Kidney (tissue), 22 donors: ENCODE measurements at regions of chr9 and their contacts with region 1.

Region 1: GRCh38 chr9:112939418-112939817 is 48.7 kb upstream of the SLC46A2 start:
- DNase-seq: no peak
- H3K4me3 ChIP-seq: no peak overlapping the region
- H3K27ac ChIP-seq: no peak overlapping the region
- H3K4me1 ChIP-seq: no peaks in the 10 kb centered on the region
- H3K27me3 ChIP-seq: no peaks in the 10 kb centered on the region
- CTCF ChIP-seq: no peak

Region 2: DNA sequence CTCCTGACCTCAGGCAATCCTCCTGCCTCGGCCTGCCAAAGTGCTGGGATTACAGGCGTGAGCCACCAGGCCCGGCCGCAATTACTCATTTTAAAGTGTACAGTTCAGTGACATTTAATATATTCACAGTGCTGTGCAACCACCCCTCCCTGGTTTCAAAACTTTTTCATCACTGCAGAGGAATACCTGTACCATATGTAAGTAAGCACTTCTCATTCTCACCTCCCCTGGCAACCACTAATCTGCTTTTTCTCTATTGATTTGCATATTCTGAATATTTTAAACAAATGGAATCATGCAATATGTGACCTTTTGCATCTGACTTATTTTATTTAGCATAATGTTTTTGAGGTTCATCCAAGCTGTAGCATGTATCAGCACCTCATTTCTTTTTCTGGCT is 474.1 kb before region 1 on chr9:
- intact Hi-C with region 1: no loop called
- DNase-seq: no peak
- H3K4me3 ChIP-seq: no peak overlapping the region
- H3K27ac ChIP-seq: no peak overlapping the region
- H3K4me1 ChIP-seq: no peaks in the 10 kb centered on the region
- H3K27me3 ChIP-seq: no peaks in the 10 kb centered on the region
- CTCF ChIP-seq: no peak

Region 3: DNA sequence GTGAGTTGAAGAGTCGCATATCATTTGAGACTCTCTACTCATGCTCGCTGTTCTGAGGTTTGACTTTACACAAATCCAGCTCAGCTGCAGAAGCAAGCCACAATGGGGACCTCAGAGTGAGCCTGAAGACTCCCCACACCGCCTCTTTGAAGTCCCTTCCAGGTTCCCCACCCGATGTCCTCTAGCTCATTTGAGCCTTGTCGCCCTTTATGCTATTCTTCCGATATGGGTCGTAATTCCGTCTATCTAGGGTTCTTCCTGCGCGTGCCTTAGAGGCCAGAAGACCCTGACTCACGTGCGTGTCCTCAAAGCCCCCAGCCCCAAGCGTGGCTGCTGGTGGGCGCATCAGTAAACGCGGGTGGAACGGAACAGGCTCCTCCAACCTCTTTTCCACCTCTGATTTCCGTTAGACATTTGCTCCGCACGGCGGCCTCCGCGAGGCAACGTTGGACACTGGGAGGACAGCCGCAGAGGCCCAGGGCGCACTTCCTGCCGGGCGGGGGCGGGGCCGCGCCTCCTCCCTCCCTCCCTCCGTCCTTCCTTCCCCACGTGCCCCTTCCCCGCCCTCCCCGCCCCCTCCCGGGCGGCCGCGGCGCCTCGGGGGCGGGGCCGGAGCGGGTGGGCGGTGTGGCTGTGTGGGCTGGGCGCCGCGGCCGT is 189.2 kb before region 1 on chr9 and contains the start of gene SNX30:
- intact Hi-C with region 1: no loop called
- DNase-seq: peak; percentile 92 to 97 (median 95)
- H3K4me3 ChIP-seq: peak within 1 kb of the TSS; percentile 75 to 94 (median 84)
- H3K27ac ChIP-seq: peak within 1 kb of the TSS; percentile 87 to 89
- H3K4me1 ChIP-seq: peaks cover 0 to 21% (median 9%) of the 10 kb centered on the region in 3 donors
- H3K27me3 ChIP-seq: no peaks in the 10 kb centered on the region
- CTCF ChIP-seq: peak; percentile 6
- total RNA-seq, gene SNX30: 22.9 TPM

Region 4: GRCh38 chr9:113095561-113095960 is 156.1 kb after region 1 on chr9:
- intact Hi-C with region 1: loop called (anchors 10 kb)
- DNase-seq: no peak
- H3K4me3 ChIP-seq: no peak overlapping the region
- H3K27ac ChIP-seq: no peak overlapping the region
- H3K4me1 ChIP-seq: no peaks in the 10 kb centered on the region
- H3K27me3 ChIP-seq: peaks cover 36% of the 10 kb centered on the region
- CTCF ChIP-seq: no peak

Region 5: GRCh38 chr9:113125386-113126035 is 186.1 kb after region 1 on chr9:
- intact Hi-C with region 1: loop called (anchors 10 kb)
- DNase-seq: no peak
- H3K4me3 ChIP-seq: no peak overlapping the region
- H3K27ac ChIP-seq: no peak overlapping the region
- H3K4me1 ChIP-seq: no peaks in the 10 kb centered on the region
- H3K27me3 ChIP-seq: no peaks in the 10 kb centered on the region
- CTCF ChIP-seq: no peak

Region 6: DNA sequence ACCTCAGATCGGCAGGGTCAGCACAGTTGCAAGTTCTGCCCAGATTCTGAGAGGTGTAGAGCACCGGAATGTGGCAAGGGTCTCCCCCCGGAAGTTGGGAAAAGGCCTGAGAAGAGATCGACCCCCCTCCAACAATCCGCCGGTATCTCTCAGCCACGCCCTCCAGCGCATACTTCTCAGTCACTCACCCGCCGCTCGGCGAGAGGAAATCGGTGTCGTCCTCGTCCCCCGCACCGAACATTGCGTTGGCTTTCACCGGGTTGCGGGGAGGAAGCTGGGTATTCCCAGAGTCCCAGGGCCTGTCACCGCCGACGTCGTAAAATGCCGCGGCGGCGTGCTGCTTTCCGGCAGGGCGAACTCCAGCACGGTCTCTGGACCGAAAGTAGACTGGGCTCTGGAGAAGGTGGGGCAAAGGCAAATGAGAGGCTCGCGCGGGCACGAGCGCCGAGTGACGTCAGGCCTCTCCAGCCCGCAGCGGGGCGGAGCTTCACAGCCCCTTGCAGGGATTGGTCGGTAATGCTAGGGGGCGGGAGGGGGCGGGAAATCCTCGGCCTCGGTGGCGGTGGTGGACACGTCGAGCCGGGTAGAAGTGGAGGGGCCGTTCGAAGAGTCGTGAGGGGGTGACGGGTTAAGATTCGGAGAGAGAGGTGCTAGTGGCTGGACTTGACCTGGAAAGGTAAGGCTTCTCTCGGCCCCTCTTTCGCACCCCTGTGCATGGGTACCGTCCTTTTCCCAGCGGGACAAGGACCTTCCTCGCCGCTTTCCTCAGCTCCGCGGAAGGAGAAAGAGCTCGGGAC is 281.8 kb after region 1 on chr9 and contains the starts of genes FKBP15 and SLC31A1:
- intact Hi-C with region 1: no loop called
- DNase-seq: peak; percentile 99
- H3K4me3 ChIP-seq: peak within 1 kb of the TSS; percentile 78 to 98 (median 93)
- H3K27ac ChIP-seq: peak within 1 kb of the TSS; percentile 83 to 88
- H3K4me1 ChIP-seq: peaks cover 4 to 21% (median 16%) of the 10 kb centered on the region in 3 donors
- H3K27me3 ChIP-seq: no peaks in the 10 kb centered on the region
- CTCF ChIP-seq: no peak
- total RNA-seq, gene FKBP15: 34.8 TPM
- total RNA-seq, gene SLC31A1: 19.5 TPM